ENCODE measurements at regions of chr22 and their contacts with region 1.

Region 1: GRCh38 chr22:35380547-35381423 is at the start of gene HMOX1:
- DNase-seq: peak; percentile 83
- H3K4me3 ChIP-seq: peak within 1 kb of the TSS; percentile 28 to 37
- H3K27ac ChIP-seq: peak within 1 kb of the TSS; percentile 60 to 73
- H3K4me1 ChIP-seq: no peaks in the 10 kb centered on the region
- H3K27me3 ChIP-seq: no peaks in the 10 kb centered on the region
- CTCF ChIP-seq: peak in 2 of 4 experiments; percentile 38 to 47
- POLR2A ChIP-seq: peak; percentile 73
- total RNA-seq, gene HMOX1: 3.5 to 31.5 TPM

Region 2: DNA sequence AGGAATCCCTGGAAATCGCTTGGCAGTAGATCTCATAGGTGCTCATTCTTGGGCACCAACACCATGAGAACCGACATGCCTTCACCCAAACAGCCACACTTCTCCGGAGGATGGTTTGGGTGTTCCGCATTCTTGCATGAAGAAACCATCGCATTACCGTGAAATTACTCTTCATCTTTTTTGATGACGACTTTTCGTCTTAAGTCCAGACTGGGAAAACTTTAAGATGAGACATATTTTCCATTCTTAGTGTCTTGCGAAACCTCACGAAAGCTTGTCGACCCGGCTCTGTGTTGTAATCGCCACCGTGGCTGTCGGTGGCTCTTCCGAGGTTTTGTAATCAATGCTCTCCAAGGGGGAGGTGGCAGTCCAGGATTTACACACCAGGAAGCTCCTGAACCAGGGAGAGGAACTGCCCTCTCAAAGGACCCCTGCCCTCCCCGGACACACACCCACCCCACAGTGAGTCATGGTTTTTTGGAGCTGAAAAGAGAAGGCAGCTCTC is 79.4 kb before region 1 on chr22:
- intact Hi-C with region 1: no loop called
- DNase-seq: no peak
- H3K4me3 ChIP-seq: no peak overlapping the region
- H3K27ac ChIP-seq: peak overlapping the region in 1 of 2 donors; percentile 94
- H3K4me1 ChIP-seq: no peaks in the 10 kb centered on the region
- H3K27me3 ChIP-seq: no peaks in the 10 kb centered on the region
- CTCF ChIP-seq: no peak
- POLR2A ChIP-seq: no peak

Region 3: GRCh38 chr22:35350539-35351503 is 30.0 kb before region 1 on chr22:
- intact Hi-C with region 1: loop called (anchors 2 kb)
- DNase-seq: peak; percentile 91
- H3K4me3 ChIP-seq: peak overlapping the region; percentile 30 to 40
- H3K27ac ChIP-seq: peak overlapping the region; percentile 53 to 59
- H3K4me1 ChIP-seq: peaks cover 4% of the 10 kb centered on the region
- H3K27me3 ChIP-seq: no peaks in the 10 kb centered on the region
- CTCF ChIP-seq: peak; percentile 51 to 99 (median 92)
- POLR2A ChIP-seq: peak; percentile 66